CD4-positive, alpha-beta T cell (primary cell): ENCODE measurements at regions of chr9 and their contacts with region 1.

Region 1: GRCh38 chr9:89000973-89001916 is 10.0 kb downstream of the S1PR3 start:
- DNase-seq: peak; percentile 58 to 81 (median 68)
- ATAC-seq: peak; percentile 46
- H3K4me3 ChIP-seq: no peak overlapping the region
- H3K4me3 Mint-ChIP-seq: no peak overlapping the region
- H3K27ac ChIP-seq: no peak overlapping the region
- H3K27ac Mint-ChIP-seq: no peak overlapping the region
- H3K4me1 ChIP-seq: peaks cover 7% of the 10 kb centered on the region
- H3K4me1 Mint-ChIP-seq: no peaks in the 10 kb centered on the region
- H3K27me3 ChIP-seq: peaks cover 8 to 11% of the 10 kb centered on the region in 2 experiments
- H3K27me3 Mint-ChIP-seq: peaks cover 29% of the 10 kb centered on the region
- CTCF ChIP-seq: peak; percentile 68

Region 2: DNA sequence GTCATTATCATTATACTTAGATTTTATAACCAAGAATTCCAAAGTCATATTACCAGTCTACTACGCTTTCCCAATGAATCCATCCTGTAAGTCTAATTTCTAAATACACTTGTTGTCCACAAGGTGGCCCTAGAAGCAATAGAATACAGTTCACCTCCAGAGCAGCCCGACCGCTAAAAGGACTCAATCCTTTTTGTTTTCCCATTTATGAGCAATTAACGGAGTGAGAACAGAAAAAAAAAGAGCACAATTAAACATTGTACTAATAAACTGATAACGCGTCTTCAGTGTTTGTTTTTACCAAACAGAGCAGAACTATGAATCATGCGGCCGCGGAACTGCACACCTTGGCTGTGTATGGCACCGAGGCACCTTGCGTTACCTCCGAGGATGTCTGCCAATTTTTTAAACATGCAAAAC is 1664.3 kb before region 1 on chr9:
- CTCF ChIA-PET with region 1: no interaction called
- POLR2A ChIA-PET with region 1: no interaction called
- intact Hi-C with region 1: loop called in 1 of 2 experiments (anchors 5 kb)
- DNase-seq: peak in 4 of 14 experiments; percentile 2 to 56 (median 36)
- ATAC-seq: no peak
- H3K4me3 ChIP-seq: peak overlapping the region; percentile 29
- H3K4me3 Mint-ChIP-seq: peak overlapping the region; percentile 83
- H3K27ac ChIP-seq: no peak overlapping the region
- H3K27ac Mint-ChIP-seq: no peak overlapping the region
- H3K4me1 ChIP-seq: peaks cover 4% of the 10 kb centered on the region
- H3K4me1 Mint-ChIP-seq: peaks cover 11% of the 10 kb centered on the region
- H3K27me3 ChIP-seq: peaks cover 20 to 28% of the 10 kb centered on the region in 2 experiments
- H3K27me3 Mint-ChIP-seq: peaks cover 34% of the 10 kb centered on the region
- CTCF ChIP-seq: peak; percentile 72

Region 3: DNA sequence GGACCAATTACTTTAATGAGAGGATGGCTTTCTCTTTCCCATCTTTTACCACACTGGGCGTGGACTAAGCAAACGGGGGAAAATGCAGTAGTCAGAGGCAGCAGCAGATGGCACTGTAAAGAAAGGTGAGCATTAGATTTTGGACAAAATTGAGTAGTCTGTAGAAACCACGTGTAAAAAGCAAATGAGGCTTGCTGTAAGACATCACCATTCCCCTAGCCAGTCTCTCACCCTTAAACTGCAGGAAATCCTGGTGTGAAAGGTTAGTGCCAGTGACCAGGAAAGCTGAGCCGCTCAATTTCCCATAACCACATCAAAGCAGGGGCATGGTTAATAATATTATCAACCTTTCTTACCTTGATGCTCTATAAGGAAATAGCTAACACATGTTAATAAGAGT is 894.8 kb before region 1 on chr9:
- CTCF ChIA-PET with region 1: no interaction called
- POLR2A ChIA-PET with region 1: no interaction called
- intact Hi-C with region 1: loop called in 1 of 2 experiments (anchors 5 kb)
- DNase-seq: peak in 3 of 14 experiments; percentile 19 to 23 (median 22)
- ATAC-seq: no peak
- H3K4me3 ChIP-seq: no peak overlapping the region
- H3K4me3 Mint-ChIP-seq: no peak overlapping the region
- H3K27ac ChIP-seq: no peak overlapping the region
- H3K27ac Mint-ChIP-seq: no peak overlapping the region
- H3K4me1 ChIP-seq: no peaks in the 10 kb centered on the region
- H3K4me1 Mint-ChIP-seq: no peaks in the 10 kb centered on the region
- H3K27me3 ChIP-seq: peaks cover 0 to 5% of the 10 kb centered on the region in 2 experiments
- H3K27me3 Mint-ChIP-seq: peaks cover 38% of the 10 kb centered on the region
- CTCF ChIP-seq: no peak

Region 4: GRCh38 chr9:88173378-88173999 is 827.8 kb before region 1 on chr9:
- CTCF ChIA-PET with region 1: no interaction called
- POLR2A ChIA-PET with region 1: no interaction called
- intact Hi-C with region 1: loop called (anchors 5 kb)
- DNase-seq: peak; percentile 5 to 76 (median 44)
- ATAC-seq: peak; percentile 48
- H3K4me3 ChIP-seq: no peak overlapping the region
- H3K4me3 Mint-ChIP-seq: no peak overlapping the region
- H3K27ac ChIP-seq: no peak overlapping the region
- H3K27ac Mint-ChIP-seq: no peak overlapping the region
- H3K4me1 ChIP-seq: no peaks in the 10 kb centered on the region
- H3K4me1 Mint-ChIP-seq: peaks cover 1% of the 10 kb centered on the region
- H3K27me3 ChIP-seq: no peaks in the 10 kb centered on the region
- H3K27me3 Mint-ChIP-seq: peaks cover 3% of the 10 kb centered on the region
- CTCF ChIP-seq: peak; percentile 91

Region 5: GRCh38 chr9:88593537-88594185 is 407.6 kb before region 1 on chr9:
- CTCF ChIA-PET with region 1: interaction called, 3 read pairs
- POLR2A ChIA-PET with region 1: no interaction called
- intact Hi-C with region 1: loop called (anchors 1 kb)
- DNase-seq: peak in 13 of 14 experiments; percentile 4 to 71 (median 35)
- ATAC-seq: no peak
- H3K4me3 ChIP-seq: no peak overlapping the region
- H3K4me3 Mint-ChIP-seq: no peak overlapping the region
- H3K27ac ChIP-seq: no peak overlapping the region
- H3K27ac Mint-ChIP-seq: no peak overlapping the region
- H3K4me1 ChIP-seq: no peaks in the 10 kb centered on the region
- H3K4me1 Mint-ChIP-seq: peaks cover 5% of the 10 kb centered on the region
- H3K27me3 ChIP-seq: peaks cover 4 to 8% of the 10 kb centered on the region in 2 experiments
- H3K27me3 Mint-ChIP-seq: peaks cover 23% of the 10 kb centered on the region
- CTCF ChIP-seq: peak; percentile 73

Region 6: DNA sequence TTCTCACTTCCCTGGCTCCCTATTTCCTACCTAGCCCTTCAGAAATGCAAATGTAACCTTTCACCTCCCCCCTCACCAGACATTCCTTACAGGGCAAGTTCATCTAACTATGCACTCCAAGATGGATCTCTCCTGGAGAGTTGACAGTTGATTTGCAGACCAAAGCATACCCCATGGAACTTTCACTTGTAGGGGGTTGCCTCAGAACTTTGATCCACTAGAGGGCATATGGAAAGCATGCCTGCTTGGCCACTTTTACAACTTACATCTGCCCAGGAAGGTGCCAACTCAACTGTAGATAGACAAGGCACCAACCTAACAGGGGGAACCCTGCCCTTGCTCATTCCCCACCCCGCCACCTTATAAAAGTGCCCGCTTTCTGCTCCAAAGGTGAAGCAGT is 278.5 kb before region 1 on chr9:
- CTCF ChIA-PET with region 1: no interaction called
- POLR2A ChIA-PET with region 1: no interaction called
- intact Hi-C with region 1: loop called (anchors 2 to 5 kb)
- DNase-seq: peak in 2 of 14 experiments; percentile 13
- ATAC-seq: no peak
- H3K4me3 ChIP-seq: no peak overlapping the region
- H3K4me3 Mint-ChIP-seq: no peak overlapping the region
- H3K27ac ChIP-seq: no peak overlapping the region
- H3K27ac Mint-ChIP-seq: no peak overlapping the region
- H3K4me1 ChIP-seq: no peaks in the 10 kb centered on the region
- H3K4me1 Mint-ChIP-seq: no peaks in the 10 kb centered on the region
- H3K27me3 ChIP-seq: peaks cover 0 to 4% of the 10 kb centered on the region in 2 experiments
- H3K27me3 Mint-ChIP-seq: peaks cover 44% of the 10 kb centered on the region
- CTCF ChIP-seq: peak; percentile 7

Region 7: DNA sequence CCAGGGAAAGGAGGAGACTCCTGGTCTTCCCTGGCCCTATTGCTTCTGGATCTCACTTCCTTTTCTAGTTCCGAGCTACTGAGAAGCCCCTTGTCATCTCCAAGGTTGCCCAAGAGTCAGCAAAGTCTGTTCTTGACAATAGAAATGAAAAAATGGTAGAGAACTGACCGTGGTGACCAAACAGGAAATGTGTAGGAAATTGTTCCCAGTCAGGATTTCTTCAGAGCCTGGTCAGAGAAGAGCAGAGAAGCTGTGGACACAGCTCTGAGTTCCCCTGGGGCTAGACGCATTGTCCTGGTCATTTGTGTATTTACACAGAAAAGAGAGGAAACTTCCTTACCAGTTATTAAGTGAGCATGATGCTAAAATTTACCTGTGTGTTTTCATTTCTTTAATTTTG is 25.6 kb after region 1 on chr9:
- CTCF ChIA-PET with region 1: no interaction called
- POLR2A ChIA-PET with region 1: no interaction called
- intact Hi-C with region 1: no loop called
- DNase-seq: peak in 1 of 14 experiments; percentile 15
- ATAC-seq: no peak
- H3K4me3 ChIP-seq: no peak overlapping the region
- H3K4me3 Mint-ChIP-seq: no peak overlapping the region
- H3K27ac ChIP-seq: no peak overlapping the region
- H3K27ac Mint-ChIP-seq: no peak overlapping the region
- H3K4me1 ChIP-seq: no peaks in the 10 kb centered on the region
- H3K4me1 Mint-ChIP-seq: no peaks in the 10 kb centered on the region
- H3K27me3 ChIP-seq: peaks cover 0 to 6% of the 10 kb centered on the region in 2 experiments
- H3K27me3 Mint-ChIP-seq: peaks cover 34% of the 10 kb centered on the region
- CTCF ChIP-seq: no peak

Region 8: DNA sequence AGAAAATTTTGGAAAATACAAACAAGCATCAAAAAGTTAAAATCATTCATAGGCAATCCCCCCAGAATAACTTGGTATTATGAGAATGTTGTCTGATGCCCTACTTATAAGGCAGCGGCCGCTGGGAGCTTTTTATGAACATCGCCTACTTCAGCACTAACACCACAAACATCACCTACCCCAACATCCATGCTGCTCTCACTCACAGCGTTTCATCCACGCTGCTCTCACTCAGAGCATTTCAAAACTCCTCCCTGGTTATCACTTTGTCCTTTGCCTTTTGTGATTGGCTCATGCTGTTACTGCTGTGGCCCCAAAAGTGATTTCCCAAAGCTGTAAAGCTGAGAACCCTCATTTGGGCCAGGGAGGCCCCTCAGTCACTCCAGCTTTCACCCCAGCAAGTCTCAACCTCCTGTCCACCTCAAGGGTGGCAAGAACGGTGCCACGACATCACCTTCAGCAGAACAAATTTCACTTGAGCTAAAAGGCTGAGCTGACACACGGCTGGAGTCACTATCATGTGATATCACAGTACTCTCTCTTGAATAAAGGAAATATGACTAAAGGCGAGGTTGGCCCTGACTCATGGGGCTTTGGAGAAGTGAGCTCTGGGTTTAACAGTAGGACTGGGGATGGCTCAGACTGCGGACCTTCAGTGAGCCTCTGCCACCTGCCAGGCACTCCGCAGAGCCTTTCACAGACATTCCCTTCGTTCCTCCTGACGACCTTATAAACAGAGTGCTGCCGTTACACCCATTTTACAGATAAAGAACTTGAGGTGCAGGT is 152.2 kb after region 1 on chr9:
- CTCF ChIA-PET with region 1: no interaction called
- POLR2A ChIA-PET with region 1: no interaction called
- intact Hi-C with region 1: no loop called
- DNase-seq: peak in 3 of 14 experiments; percentile 2 to 61 (median 49)
- ATAC-seq: peak; percentile 29
- H3K4me3 ChIP-seq: no peak overlapping the region
- H3K4me3 Mint-ChIP-seq: no peak overlapping the region
- H3K27ac ChIP-seq: no peak overlapping the region
- H3K27ac Mint-ChIP-seq: no peak overlapping the region
- H3K4me1 ChIP-seq: no peaks in the 10 kb centered on the region
- H3K4me1 Mint-ChIP-seq: peaks cover 7% of the 10 kb centered on the region
- H3K27me3 ChIP-seq: peaks cover 2 to 8% of the 10 kb centered on the region in 2 experiments
- H3K27me3 Mint-ChIP-seq: peaks cover 49% of the 10 kb centered on the region
- CTCF ChIP-seq: no peak